ENCODE measurements at regions of chr17 and their contacts with region 1.

Region 1: GRCh38 chr17:8900626-8901585 is 33.4 kb upstream of the PIK3R6 start:
- DNase-seq: no peak
- ATAC-seq: peak; percentile 47
- H3K4me3 Mint-ChIP-seq: peak overlapping the region; percentile 53
- H3K27ac Mint-ChIP-seq: peak overlapping the region; percentile 86
- H3K4me1 Mint-ChIP-seq: peaks cover 66% of the 10 kb centered on the region
- H3K27me3 Mint-ChIP-seq: no peaks in the 10 kb centered on the region
- CTCF ChIP-seq: no peak

Region 2: DNA sequence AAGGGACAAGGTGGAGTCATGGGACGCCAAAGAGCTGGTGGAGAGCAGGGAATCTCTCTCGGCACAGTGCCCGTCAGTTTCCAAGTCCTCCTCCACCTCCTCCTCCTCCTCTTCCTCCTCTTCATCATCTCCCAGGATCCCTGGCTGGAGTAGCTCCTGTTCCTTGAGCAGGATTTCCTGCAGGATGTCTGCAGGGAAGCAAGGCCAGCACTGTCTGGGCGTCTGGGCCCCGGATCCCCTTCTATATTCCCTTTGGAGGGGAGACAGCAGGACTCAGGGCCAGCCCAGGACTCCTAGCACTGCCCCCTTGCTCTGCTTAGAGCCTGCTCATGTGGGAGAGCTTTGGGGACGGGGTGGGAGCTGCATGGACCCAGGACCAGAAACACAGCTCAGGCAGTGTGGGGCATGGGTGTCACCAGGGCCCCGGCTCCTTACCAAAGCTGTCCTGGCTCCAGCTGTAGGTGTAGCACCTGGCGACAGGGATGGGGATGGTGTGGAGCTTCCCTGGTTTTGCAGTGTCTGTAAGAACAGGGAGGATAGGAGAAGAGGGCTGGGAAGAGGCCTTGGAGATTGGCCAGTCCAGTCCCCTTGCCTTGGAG is 12.1 kb before region 1 on chr17:
- CTCF ChIA-PET with region 1: interaction called, 3 read pairs
- POLR2A ChIA-PET with region 1: interaction called, 12 read pairs
- intact Hi-C with region 1: no loop called
- DNase-seq: no peak
- ATAC-seq: no peak
- H3K4me3 Mint-ChIP-seq: no peak overlapping the region
- H3K27ac Mint-ChIP-seq: no peak overlapping the region
- H3K4me1 Mint-ChIP-seq: peaks cover 9% of the 10 kb centered on the region
- H3K27me3 Mint-ChIP-seq: no peaks in the 10 kb centered on the region
- CTCF ChIP-seq: no peak

Region 3: DNA sequence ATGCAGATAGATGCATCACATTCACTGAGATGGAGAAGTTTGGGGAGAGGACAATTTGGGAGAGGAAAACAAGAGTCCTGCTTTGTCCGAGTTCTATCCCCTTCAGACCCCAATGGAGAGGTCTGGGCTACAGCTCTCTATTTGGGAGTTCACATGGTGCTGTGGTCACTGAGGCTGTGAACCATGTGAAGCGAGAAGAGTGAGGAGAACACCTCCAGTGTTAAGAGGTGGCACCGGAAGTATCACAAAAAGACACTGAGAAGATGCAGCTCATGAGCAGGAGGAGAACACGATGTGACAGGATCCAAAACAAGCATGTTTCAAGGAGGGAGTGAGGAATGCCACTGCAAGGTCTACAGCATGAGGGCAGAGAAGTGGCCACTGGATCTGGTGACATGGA is 24.9 kb after region 1 on chr17:
- CTCF ChIA-PET with region 1: no interaction called
- POLR2A ChIA-PET with region 1: no interaction called
- intact Hi-C with region 1: no loop called
- DNase-seq: no peak
- ATAC-seq: no peak
- H3K4me3 Mint-ChIP-seq: no peak overlapping the region
- H3K27ac Mint-ChIP-seq: no peak overlapping the region
- H3K4me1 Mint-ChIP-seq: peaks cover 14% of the 10 kb centered on the region
- H3K27me3 Mint-ChIP-seq: no peaks in the 10 kb centered on the region
- CTCF ChIP-seq: no peak

Region 4: DNA sequence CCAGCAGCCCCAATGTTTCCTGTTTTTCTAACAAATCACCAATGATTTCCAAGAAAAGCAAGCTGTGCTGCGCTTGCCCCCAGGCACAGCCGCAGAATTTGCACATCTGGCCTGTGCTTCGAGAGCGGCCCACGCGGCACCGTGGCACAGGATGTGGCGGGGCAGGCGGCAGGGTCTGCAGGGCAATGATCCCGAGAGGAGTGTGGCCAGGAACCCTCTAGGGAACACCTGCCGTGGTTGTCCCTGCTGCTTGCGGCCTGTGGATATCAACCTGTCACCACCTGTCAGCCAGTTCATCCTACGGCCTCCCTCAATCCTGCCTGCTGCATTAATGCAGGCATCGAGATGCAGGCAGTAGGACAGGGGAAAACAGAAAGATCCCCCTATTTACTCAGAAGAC is 40.6 kb after region 1 on chr17:
- CTCF ChIA-PET with region 1: interaction called, 4 read pairs
- POLR2A ChIA-PET with region 1: interaction called, 35 read pairs
- intact Hi-C with region 1: loop called (anchors 1 kb)
- DNase-seq: no peak
- ATAC-seq: peak; percentile 57
- H3K4me3 Mint-ChIP-seq: peak overlapping the region; percentile 51
- H3K27ac Mint-ChIP-seq: peak overlapping the region; percentile 73
- H3K4me1 Mint-ChIP-seq: peaks cover 68% of the 10 kb centered on the region
- H3K27me3 Mint-ChIP-seq: no peaks in the 10 kb centered on the region
- CTCF ChIP-seq: no peak

Region 5: GRCh38 chr17:8991514-8992285 is 90.8 kb after region 1 on chr17:
- CTCF ChIA-PET with region 1: interaction called, 34 read pairs
- POLR2A ChIA-PET with region 1: interaction called, 14 read pairs
- intact Hi-C with region 1: no loop called
- DNase-seq: no peak
- ATAC-seq: peak; percentile 53
- H3K4me3 Mint-ChIP-seq: no peak overlapping the region
- H3K27ac Mint-ChIP-seq: no peak overlapping the region
- H3K4me1 Mint-ChIP-seq: peaks cover 2% of the 10 kb centered on the region
- H3K27me3 Mint-ChIP-seq: peaks cover 2% of the 10 kb centered on the region
- CTCF ChIP-seq: peak; percentile 66

Region 6: GRCh38 chr17:9021158-9021991 is 120.5 kb after region 1 on chr17 and contains the start of gene NTN1:
- CTCF ChIA-PET with region 1: no interaction called
- POLR2A ChIA-PET with region 1: interaction called, 10 read pairs
- intact Hi-C with region 1: no loop called
- DNase-seq: peak; percentile 73
- ATAC-seq: peak; percentile 84
- H3K4me3 Mint-ChIP-seq: peak within 1 kb of the TSS; percentile 88
- H3K27ac Mint-ChIP-seq: peak within 1 kb of the TSS; percentile 72
- H3K4me1 Mint-ChIP-seq: peaks cover 23% of the 10 kb centered on the region
- H3K27me3 Mint-ChIP-seq: peaks cover 27% of the 10 kb centered on the region
- CTCF ChIP-seq: no peak
- total RNA-seq, gene NTN1: 1.0 and 1.1 TPM in 2 replicates